Activated CD4-positive, alpha-beta T cell treated with anti-CD3 and anti-CD28 coated beads, Interleukin-2, amount 10 ng/mL, durations not matched to agents 24 days and 14 days (primary cell): ENCODE measurements at regions of chr5 and their contacts with region 1.

Region 1: GRCh38 chr5:157858527-157859226 is at the start of gene CLINT1:
- DNase-seq: peak; percentile 97
- H3K4me3 Mint-ChIP-seq: peak within 1 kb of the TSS; percentile 99
- H3K27ac Mint-ChIP-seq: peak within 1 kb of the TSS; percentile 100
- H3K4me1 Mint-ChIP-seq: peaks cover 55% of the 10 kb centered on the region
- H3K27me3 Mint-ChIP-seq: no peaks in the 10 kb centered on the region
- total RNA-seq, gene CLINT1: 91.9 and 92.1 TPM in 2 replicates

Region 2: GRCh38 chr5:157731272-157732129 is 127.2 kb before region 1 on chr5 and contains the start of gene THG1L:
- intact Hi-C with region 1: loop called (anchors 2 kb)
- DNase-seq: peak; percentile 100
- H3K4me3 Mint-ChIP-seq: peak within 1 kb of the TSS; percentile 97
- H3K27ac Mint-ChIP-seq: peak within 1 kb of the TSS; percentile 98
- H3K4me1 Mint-ChIP-seq: peaks cover 25% of the 10 kb centered on the region
- H3K27me3 Mint-ChIP-seq: no peaks in the 10 kb centered on the region
- total RNA-seq, gene THG1L: 25.0 and 26.7 TPM in 2 replicates

Region 3: DNA sequence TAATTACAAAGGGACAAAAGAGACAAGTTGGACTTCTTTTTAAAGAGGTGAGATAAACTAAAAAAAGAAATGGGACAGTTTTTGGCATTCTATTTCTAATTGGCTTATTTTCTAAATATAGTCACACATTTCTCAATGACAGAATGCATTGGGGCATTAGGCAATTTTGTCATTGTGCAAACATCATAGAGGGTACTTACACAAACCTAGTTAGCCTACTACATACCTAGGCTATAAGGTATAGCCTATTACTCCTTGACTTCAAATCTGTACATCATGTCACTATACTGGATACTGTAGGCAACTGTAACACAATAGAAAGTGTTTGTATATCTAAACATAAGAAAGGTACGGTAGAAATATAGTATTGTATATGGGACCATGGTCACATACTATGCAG is 59.1 kb before region 1 on chr5:
- intact Hi-C with region 1: no loop called
- DNase-seq: no peak
- H3K4me3 Mint-ChIP-seq: no peak overlapping the region
- H3K27ac Mint-ChIP-seq: no peak overlapping the region
- H3K4me1 Mint-ChIP-seq: no peaks in the 10 kb centered on the region
- H3K27me3 Mint-ChIP-seq: no peaks in the 10 kb centered on the region

Region 4: DNA sequence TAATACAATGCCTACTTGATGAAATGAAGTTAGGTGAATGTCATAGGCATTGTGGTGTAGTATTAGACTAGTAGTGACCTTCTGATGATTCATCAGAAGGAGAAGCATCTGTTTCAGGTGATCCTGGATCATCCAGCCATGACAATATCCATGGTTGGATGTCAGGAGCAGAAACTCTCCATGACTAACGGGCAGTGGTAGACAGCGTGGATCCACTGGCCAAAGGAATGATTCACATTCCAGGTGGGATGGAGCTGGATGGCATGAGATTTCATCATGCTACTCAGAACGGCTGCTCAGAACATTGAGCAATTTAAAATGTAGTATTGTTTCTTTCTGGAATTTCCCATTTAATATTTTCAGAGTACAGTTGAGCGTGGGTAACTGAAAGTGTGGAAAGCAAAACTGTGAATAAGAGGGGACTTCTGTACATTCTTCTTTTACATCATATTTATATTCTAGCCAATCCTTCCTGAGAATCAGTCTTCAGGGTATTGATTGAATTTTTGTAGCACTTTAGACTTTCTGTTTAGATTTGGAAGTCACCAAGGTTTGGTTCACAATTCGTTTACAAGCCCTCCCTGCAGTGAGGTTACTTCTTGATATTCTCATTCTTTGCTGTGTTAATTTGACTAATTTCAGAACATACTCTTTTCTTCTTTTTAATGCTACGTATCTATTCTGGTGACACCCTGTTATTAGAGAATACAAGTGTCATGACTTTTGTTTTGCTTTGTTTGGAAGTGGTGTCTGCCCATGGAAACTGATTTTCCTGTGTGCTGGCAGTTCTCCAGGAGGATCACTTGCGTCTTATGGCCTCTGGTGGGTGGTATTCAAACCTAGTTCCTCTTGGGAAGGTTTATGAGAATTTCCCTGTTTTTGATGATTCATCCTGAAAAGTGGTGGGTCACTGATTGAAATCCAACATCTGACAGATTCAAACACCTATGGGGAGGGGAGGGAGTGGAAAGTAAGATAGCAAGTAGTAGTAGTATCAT is 12.5 kb after region 1 on chr5:
- intact Hi-C with region 1: loop called (anchors 1 kb)
- DNase-seq: no peak
- H3K4me3 Mint-ChIP-seq: no peak overlapping the region
- H3K27ac Mint-ChIP-seq: peak overlapping the region; percentile 76
- H3K4me1 Mint-ChIP-seq: peaks cover 12% of the 10 kb centered on the region
- H3K27me3 Mint-ChIP-seq: peaks cover 3% of the 10 kb centered on the region

Region 5: DNA sequence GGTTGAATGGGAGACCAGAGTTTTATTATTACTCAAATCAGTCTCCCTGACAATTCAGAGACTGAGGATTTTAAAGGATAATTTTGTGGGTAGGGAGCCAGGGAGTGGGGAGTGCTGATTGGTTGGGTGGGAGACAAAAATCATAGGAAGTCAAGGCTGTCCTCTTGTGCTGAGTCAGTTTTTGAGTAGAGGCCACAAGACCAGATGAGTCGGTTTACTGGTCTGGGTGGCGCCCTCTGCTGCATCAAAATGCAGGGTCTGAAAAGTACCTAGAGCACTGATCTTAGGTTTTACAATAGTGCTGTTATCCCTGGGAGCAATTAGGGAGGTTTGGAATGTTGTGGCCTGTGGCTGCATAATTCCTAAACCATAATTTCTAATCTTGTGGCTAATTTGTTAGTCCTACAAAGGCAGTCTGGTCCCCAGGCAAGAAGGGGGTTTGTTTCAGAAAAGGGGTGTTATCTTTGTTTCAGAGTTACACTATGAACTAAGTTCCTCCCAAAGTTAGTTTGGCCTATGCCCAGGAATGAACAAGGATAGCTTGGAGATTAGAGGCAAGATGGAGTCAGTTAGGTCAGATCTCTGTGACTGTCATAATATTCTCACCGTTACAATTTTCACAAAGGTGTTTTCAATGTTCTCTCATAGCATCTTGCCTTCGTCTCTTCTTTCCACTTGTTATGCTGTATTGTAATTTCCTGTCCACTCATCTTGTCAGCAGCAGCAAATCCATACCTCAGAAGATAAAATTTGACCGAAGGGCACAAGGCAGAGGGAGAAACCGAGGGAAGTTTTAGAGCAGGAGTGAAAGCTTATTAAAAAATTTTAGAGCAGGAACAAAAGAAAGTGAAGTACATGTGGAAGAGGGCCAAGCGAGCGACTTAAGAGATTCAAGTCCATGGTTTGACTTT is 59.5 kb after region 1 on chr5:
- intact Hi-C with region 1: loop called (anchors 1 kb)
- DNase-seq: peak; percentile 87
- H3K4me3 Mint-ChIP-seq: peak overlapping the region; percentile 76
- H3K27ac Mint-ChIP-seq: no peak overlapping the region
- H3K4me1 Mint-ChIP-seq: peaks cover 28% of the 10 kb centered on the region
- H3K27me3 Mint-ChIP-seq: no peaks in the 10 kb centered on the region

Region 6: DNA sequence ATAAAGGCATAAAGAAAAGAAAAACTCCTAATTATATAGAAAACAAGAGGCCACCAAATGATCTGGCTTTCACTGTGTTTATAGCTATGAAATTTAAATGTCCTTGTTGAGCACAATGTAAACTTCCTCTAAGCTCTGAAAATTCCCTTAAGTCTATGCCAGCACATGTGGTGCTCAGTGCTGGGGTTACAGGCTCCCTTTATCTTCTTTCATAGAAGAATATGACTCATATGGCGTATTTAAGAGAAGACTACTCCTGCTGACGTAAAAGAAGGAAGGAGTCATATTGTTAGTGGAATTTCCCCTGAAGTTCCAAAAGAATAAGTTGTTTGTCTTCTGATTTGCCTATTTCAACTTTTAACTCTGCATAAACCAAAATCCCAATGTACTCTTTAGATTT is 1320.3 kb after region 1 on chr5:
- intact Hi-C with region 1: loop called (anchors 10 kb)
- DNase-seq: no peak
- H3K4me3 Mint-ChIP-seq: peak overlapping the region; percentile 68
- H3K27ac Mint-ChIP-seq: peak overlapping the region; percentile 94
- H3K4me1 Mint-ChIP-seq: peaks cover 60% of the 10 kb centered on the region
- H3K27me3 Mint-ChIP-seq: no peaks in the 10 kb centered on the region